Panc1 (cell line): ENCODE measurements at regions of chr1 and their contacts with region 1.

Region 1: GRCh38 chr1:207797229-207797961 is 45.5 kb downstream of the CD46 start:
- DNase-seq: peak; percentile 84
- ATAC-seq: peak; percentile 95
- H3K4me3 ChIP-seq: no peak overlapping the region
- H3K27ac ChIP-seq: no peak overlapping the region
- H3K4me1 ChIP-seq: no peaks in the 10 kb centered on the region
- H3K27me3 ChIP-seq: no peaks in the 10 kb centered on the region
- CTCF ChIP-seq: peak; percentile 84

Region 2: GRCh38 chr1:207619871-207620542 is 177.4 kb before region 1 on chr1:
- CTCF ChIA-PET with region 1: interaction called, 12 read pairs
- POLR2A ChIA-PET with region 1: no interaction called
- in situ Hi-C with region 1: no loop called
- intact Hi-C with region 1: no loop called
- DNase-seq: peak; percentile 27
- ATAC-seq: peak; percentile 91
- H3K4me3 ChIP-seq: no peak overlapping the region
- H3K27ac ChIP-seq: no peak overlapping the region
- H3K4me1 ChIP-seq: no peaks in the 10 kb centered on the region
- H3K27me3 ChIP-seq: no peaks in the 10 kb centered on the region
- CTCF ChIP-seq: peak; percentile 85

Region 3: GRCh38 chr1:207654320-207654719 is 143.1 kb before region 1 on chr1:
- CTCF ChIA-PET with region 1: interaction called, 5 read pairs
- POLR2A ChIA-PET with region 1: no interaction called
- in situ Hi-C with region 1: no loop called
- intact Hi-C with region 1: loop called (anchors 2 kb)
- DNase-seq: no peak
- ATAC-seq: no peak
- H3K4me3 ChIP-seq: no peak overlapping the region
- H3K27ac ChIP-seq: no peak overlapping the region
- H3K4me1 ChIP-seq: no peaks in the 10 kb centered on the region
- H3K27me3 ChIP-seq: peaks cover 9% of the 10 kb centered on the region
- CTCF ChIP-seq: peak; percentile 28; the same call in 1 of the 2 replicates

Region 4: GRCh38 chr1:207702317-207702716 is 95.1 kb before region 1 on chr1:
- CTCF ChIA-PET with region 1: no interaction called
- POLR2A ChIA-PET with region 1: no interaction called
- in situ Hi-C with region 1: no loop called
- intact Hi-C with region 1: loop called (anchors 10 kb)
- DNase-seq: no peak
- ATAC-seq: no peak
- H3K4me3 ChIP-seq: no peak overlapping the region
- H3K27ac ChIP-seq: no peak overlapping the region
- H3K4me1 ChIP-seq: no peaks in the 10 kb centered on the region
- H3K27me3 ChIP-seq: no peaks in the 10 kb centered on the region
- CTCF ChIP-seq: no peak

Region 5: GRCh38 chr1:207828485-207829158 is 31.2 kb after region 1 on chr1:
- CTCF ChIA-PET with region 1: interaction called, 12 read pairs
- POLR2A ChIA-PET with region 1: no interaction called
- in situ Hi-C with region 1: no loop called
- intact Hi-C with region 1: no loop called
- DNase-seq: peak; percentile 80
- ATAC-seq: peak; percentile 86
- H3K4me3 ChIP-seq: no peak overlapping the region
- H3K27ac ChIP-seq: no peak overlapping the region
- H3K4me1 ChIP-seq: peaks cover 33% of the 10 kb centered on the region
- H3K27me3 ChIP-seq: no peaks in the 10 kb centered on the region
- CTCF ChIP-seq: peak; percentile 91